IMR-90 (cell line): ENCODE measurements at regions of chr10 and their contacts with region 1.

Region 1: DNA sequence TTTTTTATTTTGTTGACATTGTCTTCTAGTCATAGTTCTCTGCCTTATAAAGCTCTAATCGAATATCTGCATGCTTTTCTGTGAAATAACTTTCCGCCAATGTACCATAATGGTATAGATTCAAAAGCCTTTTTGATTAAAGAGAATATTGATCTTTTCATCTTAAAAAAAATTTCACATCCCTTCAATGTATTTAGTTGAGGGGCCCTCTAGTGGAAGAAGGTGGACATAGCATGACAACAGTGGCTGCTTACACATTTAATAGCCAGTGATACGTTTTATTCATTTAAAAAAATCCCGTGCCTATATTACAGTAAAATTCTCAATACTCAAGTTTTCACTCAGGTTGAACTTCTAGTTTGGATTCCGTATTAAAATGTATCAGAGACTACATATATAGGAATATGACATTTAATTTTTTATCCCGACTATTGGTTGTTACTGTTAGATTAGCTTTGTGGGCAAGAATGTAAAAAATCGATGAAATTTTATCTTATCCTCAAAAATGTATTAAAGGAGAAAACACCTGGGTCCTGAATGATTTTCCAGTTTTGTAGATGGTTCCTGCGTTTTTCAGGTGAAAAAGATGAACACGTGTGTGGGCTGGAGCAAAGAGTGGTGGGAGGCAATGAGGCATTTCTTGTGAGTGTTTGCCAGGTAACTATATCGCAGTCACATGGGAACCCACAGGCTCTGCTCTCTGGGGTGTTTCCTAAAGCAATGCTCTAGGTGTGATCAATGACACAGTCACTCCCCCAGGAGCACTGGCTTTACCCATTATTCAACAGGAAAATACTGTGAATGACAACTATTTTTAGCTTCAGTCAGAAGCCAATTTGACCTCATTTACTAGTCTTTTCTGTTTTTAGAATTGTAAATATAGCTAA is 24.1 kb upstream of the PNLIP start:
- DNase-seq: peak; percentile 52
- ATAC-seq: peak; percentile 75
- H3K4me3 ChIP-seq: no peak overlapping the region
- H3K27ac ChIP-seq: no peak overlapping the region
- H3K4me1 ChIP-seq: no peaks in the 10 kb centered on the region
- H3K27me3 ChIP-seq: no peaks in the 10 kb centered on the region
- CTCF ChIP-seq: peak; percentile 66
- POLR2A ChIP-seq: no peak
- RAD21 ChIP-seq: no peak

Region 2: DNA sequence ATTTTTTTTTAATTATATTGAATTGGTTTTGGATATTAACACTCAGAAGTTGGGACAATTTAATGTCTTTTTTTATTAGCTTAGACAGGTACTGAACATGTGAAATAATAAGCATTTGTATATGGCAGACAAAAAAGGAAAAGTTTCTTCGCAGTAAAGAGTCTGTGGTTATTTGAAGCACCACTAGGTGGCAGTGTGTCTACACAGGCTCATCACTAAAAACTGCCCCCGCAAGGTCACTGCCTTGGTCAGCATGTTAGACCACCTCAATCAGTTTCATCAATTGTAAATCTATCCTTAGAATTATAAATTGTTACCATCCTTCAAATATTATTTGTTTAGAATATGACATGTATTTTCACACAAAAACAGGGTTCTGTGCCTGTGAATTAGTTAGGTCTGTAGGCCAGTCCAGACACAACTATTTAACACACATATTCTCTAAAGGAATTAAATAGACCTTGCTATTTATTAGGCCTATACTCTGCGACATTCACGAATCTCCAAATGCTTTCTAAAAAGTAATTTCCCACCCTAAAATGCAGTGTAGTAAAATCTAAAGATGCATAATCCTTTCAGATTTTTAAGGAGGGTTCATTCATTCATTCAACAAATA is 77.0 kb before region 1 on chr10:
- CTCF ChIA-PET with region 1: no interaction called
- POLR2A ChIA-PET with region 1: no interaction called
- dilution Hi-C with region 1: no loop called
- in situ Hi-C with region 1: no loop called
- intact Hi-C with region 1: loop called (anchors 2 kb)
- DNase-seq: peak; percentile 31
- ATAC-seq: peak; percentile 73
- H3K4me3 ChIP-seq: no peak overlapping the region
- H3K27ac ChIP-seq: no peak overlapping the region
- H3K4me1 ChIP-seq: no peaks in the 10 kb centered on the region
- H3K27me3 ChIP-seq: no peaks in the 10 kb centered on the region
- CTCF ChIP-seq: peak; percentile 67
- POLR2A ChIP-seq: no peak
- RAD21 ChIP-seq: peak; percentile 47